Left cardiac atrium (tissue), 4 donors: ENCODE measurements at regions of chr4 and their contacts with region 1.

Region 1: DNA sequence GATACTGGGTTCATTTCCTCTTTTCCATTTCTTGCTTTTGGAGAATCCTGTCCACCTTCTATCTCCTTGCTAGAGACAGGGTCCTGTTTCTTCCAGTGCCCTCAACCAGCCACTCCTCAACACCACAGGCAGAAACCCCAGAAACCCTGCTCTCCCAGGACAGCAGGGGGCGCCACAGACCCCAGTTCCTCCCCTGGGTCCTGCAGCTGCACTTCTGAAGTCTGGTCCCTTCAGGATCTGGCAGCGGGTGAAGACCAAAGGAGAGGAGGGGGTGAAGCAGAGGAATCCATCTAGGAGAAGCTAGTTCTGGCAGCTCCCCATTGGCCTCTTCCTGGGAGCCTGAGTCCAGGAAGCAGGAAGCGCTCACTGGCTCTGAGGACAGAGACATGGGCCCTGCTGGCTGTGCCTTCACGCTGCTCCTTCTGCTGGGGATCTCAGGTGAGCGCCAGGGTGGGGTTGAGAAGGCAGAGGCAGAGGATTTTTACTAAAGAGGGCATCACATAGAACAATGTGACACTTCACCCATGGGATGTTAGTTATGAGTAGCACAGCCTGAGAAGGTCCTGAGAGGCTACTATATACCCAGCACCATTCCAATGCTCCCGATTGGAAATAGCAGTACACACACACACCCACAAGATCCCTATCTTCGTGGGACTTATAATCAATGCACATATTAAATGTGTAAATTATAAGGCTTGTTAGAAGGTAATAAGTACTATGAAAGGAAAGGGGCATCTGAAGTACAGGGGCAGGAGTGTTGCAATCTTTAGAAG is at the start of gene PRSS48:
- DNase-seq: peak; percentile 56
- ATAC-seq: peak; percentile 72 to 78
- total RNA-seq, gene PRSS48: not detected

Region 2: DNA sequence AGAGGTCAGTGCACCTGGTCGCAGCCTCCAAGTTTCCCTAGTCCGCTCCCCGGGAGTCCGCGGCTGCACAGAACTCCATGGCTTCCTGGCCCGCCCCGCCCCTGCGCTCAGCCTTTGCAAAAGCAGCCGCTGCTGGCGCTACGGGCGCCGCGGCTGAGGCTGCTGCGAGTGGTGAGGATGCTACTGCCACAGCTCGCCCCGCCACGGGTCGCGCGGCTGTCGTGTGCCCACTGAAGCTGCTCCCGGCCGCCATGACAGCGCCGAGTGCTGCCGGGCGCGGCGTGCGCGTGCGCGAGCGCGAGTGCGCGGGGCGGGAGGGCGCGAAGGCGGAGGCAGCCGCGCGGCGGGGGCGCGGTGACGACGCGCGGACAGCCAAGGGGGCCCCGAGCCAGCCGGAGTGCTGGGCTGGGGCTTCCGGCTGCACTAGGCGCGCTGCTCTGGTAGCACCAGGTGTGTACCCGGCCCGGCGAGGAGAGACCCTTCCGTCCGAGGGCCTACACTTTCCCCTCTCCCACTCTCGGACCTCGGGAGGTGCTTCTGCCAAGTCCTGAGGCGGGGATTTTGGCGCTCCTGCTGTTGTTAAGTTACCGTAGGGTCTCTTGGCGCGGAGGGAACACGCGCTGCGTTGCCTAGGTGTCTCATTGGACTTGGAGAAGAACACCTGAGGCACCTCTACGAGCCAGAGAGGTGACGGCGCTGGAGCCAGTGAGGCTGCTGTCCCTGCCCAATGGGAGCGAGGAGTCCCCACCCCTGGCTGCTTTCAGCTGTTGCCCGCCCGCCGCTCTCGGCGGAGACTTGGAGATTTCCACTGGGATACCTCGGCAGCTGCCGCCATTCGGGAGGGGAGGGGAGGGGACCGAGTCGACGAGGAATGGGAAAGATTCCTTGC is 261.3 kb before region 1 on chr4:
- intact Hi-C with region 1: loop called in 1 of 2 experiments (anchors 10 kb)
- DNase-seq: peak; percentile 77
- ATAC-seq: peak; percentile 96 to 97

Region 3: GRCh38 chr4:151340751-151341385 is 63.9 kb after region 1 on chr4:
- intact Hi-C with region 1: no loop called
- DNase-seq: no peak
- ATAC-seq: no peak

Region 4: DNA sequence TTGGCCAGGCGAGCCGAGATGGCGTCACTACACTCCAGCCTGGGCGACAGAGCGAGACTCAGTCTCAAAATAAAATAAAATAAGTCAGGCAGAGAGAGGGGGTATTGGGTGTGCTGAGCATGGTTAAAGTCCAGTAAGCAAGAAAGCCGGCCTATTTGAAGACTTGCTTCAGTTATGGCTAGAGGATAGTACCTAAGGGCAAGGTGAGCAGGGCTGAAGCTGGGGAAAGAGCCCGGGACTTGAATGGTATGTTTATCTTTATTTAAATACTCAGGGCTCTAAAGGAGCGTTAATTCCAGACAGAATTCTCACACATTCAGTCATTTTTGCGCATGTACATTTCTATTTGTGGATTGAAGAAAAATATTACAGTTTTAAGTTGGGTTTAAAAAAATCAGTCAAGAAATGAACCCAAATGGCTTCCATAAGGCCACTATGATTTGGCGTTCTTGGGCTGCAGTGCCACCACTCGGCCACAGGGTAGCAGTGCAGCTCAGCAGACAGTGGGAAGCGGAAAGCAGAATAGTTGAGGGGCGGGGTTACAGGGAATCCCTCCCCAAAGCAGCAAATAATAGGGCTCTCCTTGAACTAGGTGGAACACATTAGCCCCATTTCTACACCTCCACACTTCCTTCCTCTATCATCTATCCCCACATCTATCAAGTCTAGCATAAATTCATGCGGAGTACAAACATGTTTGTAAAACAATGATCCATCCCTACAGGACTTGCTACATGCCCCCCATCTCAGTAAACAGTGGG is 85.6 kb after region 1 on chr4:
- intact Hi-C with region 1: loop called (anchors 5 to 10 kb)
- DNase-seq: peak; percentile 83
- ATAC-seq: peak; percentile 96